ENCODE measurements at regions of chr2 and their contacts with region 1.

Region 1: GRCh38 chr2:8472545-8473323 is 209.1 kb upstream of the ID2 start:
- DNase-seq: no peak
- H3K4me3 ChIP-seq: no peak overlapping the region
- H3K27ac ChIP-seq: no peak overlapping the region
- H3K4me1 ChIP-seq: no peaks in the 10 kb centered on the region
- H3K27me3 ChIP-seq: no peaks in the 10 kb centered on the region
- CTCF ChIP-seq: no peak

Region 2: GRCh38 chr2:8514796-8515758 is 42.3 kb after region 1 on chr2:
- CTCF ChIA-PET with region 1: no interaction called
- dilution Hi-C with region 1: loop called (anchors 5 kb)
- in situ Hi-C with region 1: no loop called
- intact Hi-C with region 1: no loop called
- DNase-seq: no peak
- H3K4me3 ChIP-seq: no peak overlapping the region
- H3K27ac ChIP-seq: no peak overlapping the region
- H3K4me1 ChIP-seq: no peaks in the 10 kb centered on the region
- H3K27me3 ChIP-seq: no peaks in the 10 kb centered on the region
- CTCF ChIP-seq: no peak